ENCODE measurements at regions of chr14 and their contacts with region 1.

Region 1: DNA sequence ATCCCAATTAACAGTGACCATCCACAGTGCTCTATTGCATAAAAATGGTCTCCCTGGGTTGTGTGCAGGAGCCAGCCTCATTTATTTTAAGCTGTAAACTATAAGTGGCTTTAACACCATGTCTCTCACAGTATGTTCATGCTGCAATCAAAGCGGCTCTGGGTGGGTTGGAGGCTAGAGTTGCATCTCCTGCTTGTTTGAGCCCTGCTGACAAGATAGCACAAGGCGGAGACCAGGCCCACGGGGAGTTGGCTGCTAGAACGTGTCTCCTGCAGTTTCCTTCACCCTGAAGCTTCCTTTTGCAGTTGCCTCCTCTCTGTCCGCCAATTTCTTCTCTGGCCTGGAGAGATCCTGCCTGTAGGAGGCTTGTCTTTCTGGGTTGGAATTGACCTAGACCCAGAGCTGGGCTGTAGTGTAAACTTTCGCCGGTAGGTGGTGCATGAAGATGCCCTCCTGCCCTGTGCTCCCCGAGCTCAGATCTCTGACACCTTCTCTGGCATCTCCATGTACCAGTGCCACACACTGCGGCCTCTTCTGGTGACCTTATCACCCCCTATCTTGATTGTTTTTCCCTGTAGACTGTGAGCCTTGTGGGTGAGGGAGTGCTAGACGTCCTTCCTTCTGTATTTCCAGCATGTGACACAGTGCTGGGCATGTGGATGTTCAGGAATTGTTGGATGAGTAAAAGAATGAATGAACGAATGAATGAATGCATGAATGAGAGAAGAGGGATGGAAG is 10.3 kb downstream of the OTUB2 start:
- DNase-seq: peak; percentile 90
- ATAC-seq: peak; percentile 100
- H3K4me3 Mint-ChIP-seq: no peak overlapping the region
- H3K27ac Mint-ChIP-seq: no peak overlapping the region
- H3K4me1 Mint-ChIP-seq: peaks cover 4% of the 10 kb centered on the region
- H3K27me3 Mint-ChIP-seq: no peaks in the 10 kb centered on the region
- CTCF ChIP-seq: peak; percentile 77

Region 2: GRCh38 chr14:93811676-93812075 is 224.8 kb before region 1 on chr14:
- CTCF ChIA-PET with region 1: no interaction called
- POLR2A ChIA-PET with region 1: no interaction called
- intact Hi-C with region 1: no loop called
- DNase-seq: no peak
- ATAC-seq: no peak
- H3K4me3 Mint-ChIP-seq: no peak overlapping the region
- H3K27ac Mint-ChIP-seq: no peak overlapping the region
- H3K4me1 Mint-ChIP-seq: peaks cover 2% of the 10 kb centered on the region
- H3K27me3 Mint-ChIP-seq: peaks cover 6% of the 10 kb centered on the region
- CTCF ChIP-seq: no peak

Region 3: GRCh38 chr14:93914278-93914677 is 122.2 kb before region 1 on chr14:
- CTCF ChIA-PET with region 1: no interaction called
- POLR2A ChIA-PET with region 1: no interaction called
- intact Hi-C with region 1: no loop called
- DNase-seq: peak; percentile 28
- ATAC-seq: peak; percentile 69
- H3K4me3 Mint-ChIP-seq: no peak overlapping the region
- H3K27ac Mint-ChIP-seq: no peak overlapping the region
- H3K4me1 Mint-ChIP-seq: peaks cover 3% of the 10 kb centered on the region
- H3K27me3 Mint-ChIP-seq: peaks cover 2% of the 10 kb centered on the region
- CTCF ChIP-seq: no peak

Region 4: DNA sequence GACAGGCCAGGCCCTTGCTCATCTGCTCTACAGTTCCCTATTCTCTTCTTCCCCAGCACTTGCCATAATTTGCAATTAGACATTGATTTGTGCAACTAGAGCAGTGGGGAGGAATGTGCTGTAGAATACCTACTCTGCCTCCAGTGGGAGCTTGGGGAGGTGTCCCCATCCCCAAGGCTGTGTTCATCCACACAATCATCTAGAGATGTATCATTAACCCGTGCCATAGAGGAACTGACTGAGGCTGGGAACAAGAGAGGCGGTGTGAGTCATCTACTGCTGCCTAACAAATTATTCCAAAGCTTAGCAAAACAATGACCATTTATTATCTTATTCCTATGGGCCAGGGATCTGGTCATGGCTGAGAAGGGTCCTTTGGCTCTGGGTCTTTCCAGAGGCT is 15.5 kb before region 1 on chr14:
- CTCF ChIA-PET with region 1: interaction called, 23 read pairs
- POLR2A ChIA-PET with region 1: interaction called, 3 read pairs
- intact Hi-C with region 1: no loop called
- DNase-seq: no peak
- ATAC-seq: no peak
- H3K4me3 Mint-ChIP-seq: no peak overlapping the region
- H3K27ac Mint-ChIP-seq: no peak overlapping the region
- H3K4me1 Mint-ChIP-seq: peaks cover 32% of the 10 kb centered on the region
- H3K27me3 Mint-ChIP-seq: peaks cover 3% of the 10 kb centered on the region
- CTCF ChIP-seq: no peak

Region 5: DNA sequence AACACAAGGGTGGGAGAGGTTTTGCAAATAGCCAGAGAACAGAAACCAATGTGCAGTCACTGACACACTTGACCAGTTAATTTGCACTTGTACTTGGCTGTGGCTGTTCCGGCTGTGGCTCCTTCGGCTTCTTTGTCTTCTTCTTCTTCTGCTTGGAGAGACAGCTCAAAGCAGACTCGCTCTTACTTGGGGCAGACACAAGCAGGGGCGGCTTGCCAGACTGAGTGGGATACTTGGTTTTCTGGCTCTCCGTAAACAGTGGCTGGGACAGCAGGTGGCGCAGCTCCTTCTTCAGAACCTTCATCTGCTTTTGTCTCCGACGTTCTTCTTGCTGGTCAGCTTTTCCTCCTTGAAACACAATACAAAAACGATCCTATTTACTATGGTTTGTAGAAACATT is 14.6 kb after region 1 on chr14:
- CTCF ChIA-PET with region 1: interaction called, 22 read pairs
- POLR2A ChIA-PET with region 1: interaction called, 4 read pairs
- intact Hi-C with region 1: no loop called
- DNase-seq: no peak
- ATAC-seq: no peak
- H3K4me3 Mint-ChIP-seq: no peak overlapping the region
- H3K27ac Mint-ChIP-seq: no peak overlapping the region
- H3K4me1 Mint-ChIP-seq: peaks cover 13% of the 10 kb centered on the region
- H3K27me3 Mint-ChIP-seq: no peaks in the 10 kb centered on the region
- CTCF ChIP-seq: no peak

Region 6: GRCh38 chr14:94129111-94129757 is 92.8 kb after region 1 on chr14 and contains the start of gene IFI27L2:
- CTCF ChIA-PET with region 1: interaction called, 72 read pairs
- POLR2A ChIA-PET with region 1: no interaction called
- intact Hi-C with region 1: no loop called
- DNase-seq: peak; percentile 84
- ATAC-seq: peak; percentile 99
- H3K4me3 Mint-ChIP-seq: peak within 1 kb of the TSS; percentile 76
- H3K27ac Mint-ChIP-seq: peak within 1 kb of the TSS; percentile 66
- H3K4me1 Mint-ChIP-seq: peaks cover 15% of the 10 kb centered on the region
- H3K27me3 Mint-ChIP-seq: peaks cover 3% of the 10 kb centered on the region
- CTCF ChIP-seq: peak; percentile 44
- total RNA-seq, gene IFI27L2: 43.0 to 44.5 TPM

Region 7: GRCh38 chr14:94173885-94174603 is 137.6 kb after region 1 on chr14 and contains the start of gene PPP4R4:
- CTCF ChIA-PET with region 1: interaction called, 47 read pairs
- POLR2A ChIA-PET with region 1: no interaction called
- intact Hi-C with region 1: no loop called
- DNase-seq: peak; percentile 89
- ATAC-seq: peak; percentile 96
- H3K4me3 Mint-ChIP-seq: peak within 1 kb of the TSS; percentile 71
- H3K27ac Mint-ChIP-seq: no peak within 1 kb of the TSS
- H3K4me1 Mint-ChIP-seq: peaks cover 18% of the 10 kb centered on the region
- H3K27me3 Mint-ChIP-seq: peaks cover 31% of the 10 kb centered on the region
- CTCF ChIP-seq: no peak
- total RNA-seq, gene PPP4R4: 0.63 to 1.2 TPM

Measured in activated CD8-positive, alpha-beta T cell treated with anti-CD3 and anti-CD28 coated beads for 36 hours (primary cell).